ENCODE measurements at regions of chr4 and their contacts with region 1.

Region 1: DNA sequence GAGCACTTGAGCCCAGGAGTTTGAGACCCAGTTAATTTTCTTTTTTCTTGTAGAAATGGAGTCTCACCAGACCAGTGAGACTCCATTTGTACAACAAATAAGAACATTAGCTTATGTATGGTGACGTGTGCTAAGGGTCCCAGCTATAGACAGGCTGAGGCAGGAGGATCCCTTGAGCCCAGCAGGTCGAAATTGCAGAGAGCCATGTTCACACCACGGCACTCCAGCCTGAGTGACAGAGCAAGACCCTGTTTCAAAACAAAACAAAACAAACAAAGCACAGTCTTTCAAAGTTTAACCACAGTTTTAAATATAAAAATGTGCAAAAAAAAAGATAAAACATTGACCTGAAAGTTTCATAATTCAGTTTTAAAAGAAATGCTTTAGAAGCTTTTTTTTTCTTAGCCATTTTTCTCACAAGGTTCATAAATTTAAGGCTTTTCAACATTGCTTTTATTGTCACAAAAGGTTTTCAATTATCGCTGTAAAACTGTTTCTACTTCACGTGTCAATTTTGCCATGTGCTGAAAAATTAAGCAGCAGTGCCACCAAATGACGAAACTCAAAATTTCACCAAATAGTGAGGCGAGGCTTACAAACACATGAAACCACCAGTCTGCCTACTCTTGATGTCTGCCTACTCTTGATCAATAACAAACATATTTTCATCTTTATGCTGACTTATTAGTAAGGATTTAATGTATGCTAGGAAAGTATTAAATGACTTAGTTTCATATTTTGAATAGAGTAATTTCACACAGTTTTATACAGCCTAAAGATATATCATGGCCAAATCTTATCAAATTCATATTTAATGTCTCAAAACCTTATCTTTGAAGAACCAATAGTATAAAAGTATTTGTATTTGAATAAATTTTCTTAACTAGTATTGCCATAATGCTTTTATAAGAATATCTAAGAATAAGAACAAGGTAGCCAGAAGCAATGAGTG is 126.3 kb downstream of the NEK1 start:
- DNase-seq: peak; percentile 84
- H3K4me3 Mint-ChIP-seq: no peak overlapping the region
- H3K27ac Mint-ChIP-seq: no peak overlapping the region
- H3K4me1 Mint-ChIP-seq: no peaks in the 10 kb centered on the region
- H3K27me3 Mint-ChIP-seq: no peaks in the 10 kb centered on the region

Region 2: DNA sequence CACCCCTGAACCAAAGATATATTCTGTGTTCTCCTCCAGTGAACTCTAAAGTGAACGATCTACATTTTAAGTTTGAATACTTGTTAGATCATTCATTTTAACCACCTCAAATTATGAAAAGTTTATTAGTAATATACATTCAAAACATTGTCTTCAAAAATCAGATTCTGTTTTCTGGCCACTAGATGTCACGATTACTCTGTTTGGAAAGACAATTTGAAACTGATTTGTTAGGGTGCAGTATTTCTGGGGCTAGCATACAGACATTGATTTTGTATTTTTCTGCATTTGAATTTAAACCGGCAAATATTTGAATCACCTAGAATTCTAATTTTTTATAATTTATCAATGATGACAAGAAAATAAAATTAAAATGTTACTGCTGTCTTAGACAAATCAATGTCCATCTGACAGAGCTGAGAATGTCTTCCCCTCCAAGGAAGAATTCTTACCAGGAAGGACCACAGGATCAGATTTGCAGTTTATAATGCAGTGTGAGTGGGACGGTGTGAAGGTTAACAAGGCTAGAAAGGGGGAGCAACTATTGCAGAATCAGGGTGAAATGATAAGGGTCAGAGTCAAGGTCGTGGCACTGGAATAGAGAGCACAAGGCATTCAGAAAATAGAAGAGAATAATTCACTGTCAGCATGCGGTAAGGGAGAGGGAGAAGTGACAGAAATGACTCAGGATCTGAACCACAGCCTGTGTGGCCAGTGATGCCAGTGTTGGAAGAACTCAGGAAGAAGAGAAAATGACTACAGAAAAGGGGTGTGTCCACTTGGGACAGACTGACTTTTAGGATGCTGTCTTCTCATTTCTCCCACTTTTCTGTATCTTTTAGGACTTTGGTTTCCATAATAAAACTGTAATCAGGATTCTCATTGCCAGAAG is 1302.1 kb before region 1 on chr4:
- intact Hi-C with region 1: loop called (anchors 10 kb)
- DNase-seq: no peak
- H3K4me3 Mint-ChIP-seq: no peak overlapping the region
- H3K27ac Mint-ChIP-seq: no peak overlapping the region
- H3K4me1 Mint-ChIP-seq: peaks cover 5% of the 10 kb centered on the region
- H3K27me3 Mint-ChIP-seq: no peaks in the 10 kb centered on the region

Region 3: DNA sequence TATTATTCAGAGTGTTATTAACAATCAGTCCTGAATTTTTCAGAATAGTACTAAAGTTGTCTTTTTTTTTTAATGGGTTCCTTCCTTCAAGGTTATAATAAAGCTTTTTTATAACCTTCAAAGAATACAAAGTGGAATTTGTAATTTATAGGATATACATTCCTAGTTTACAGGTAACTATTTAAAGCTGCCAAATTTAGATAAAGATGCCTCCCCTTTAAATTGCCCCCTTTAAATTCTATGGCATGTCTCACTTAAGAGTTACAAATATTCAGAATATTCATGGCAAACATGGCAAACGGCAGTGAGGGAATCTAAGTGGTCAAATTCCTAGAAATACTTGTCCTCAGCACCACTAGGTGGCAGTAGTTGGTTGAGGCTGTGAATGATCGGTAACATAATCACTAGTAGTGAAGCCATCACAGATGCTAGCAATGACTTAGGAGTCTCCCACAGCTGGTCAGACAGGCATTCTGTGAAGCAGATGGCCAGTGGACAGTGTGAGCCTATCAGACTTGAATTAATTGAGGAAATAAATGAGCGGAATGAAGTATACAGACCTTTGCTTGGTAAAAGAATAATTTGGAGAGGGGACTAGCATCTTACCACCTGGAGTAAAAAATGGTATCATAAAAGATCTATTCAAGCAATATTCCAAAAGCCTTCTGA is 562.4 kb before region 1 on chr4:
- intact Hi-C with region 1: loop called (anchors 1 kb)
- DNase-seq: peak; percentile 85
- H3K4me3 Mint-ChIP-seq: no peak overlapping the region
- H3K27ac Mint-ChIP-seq: no peak overlapping the region
- H3K4me1 Mint-ChIP-seq: peaks cover 2% of the 10 kb centered on the region
- H3K27me3 Mint-ChIP-seq: no peaks in the 10 kb centered on the region

Region 4: DNA sequence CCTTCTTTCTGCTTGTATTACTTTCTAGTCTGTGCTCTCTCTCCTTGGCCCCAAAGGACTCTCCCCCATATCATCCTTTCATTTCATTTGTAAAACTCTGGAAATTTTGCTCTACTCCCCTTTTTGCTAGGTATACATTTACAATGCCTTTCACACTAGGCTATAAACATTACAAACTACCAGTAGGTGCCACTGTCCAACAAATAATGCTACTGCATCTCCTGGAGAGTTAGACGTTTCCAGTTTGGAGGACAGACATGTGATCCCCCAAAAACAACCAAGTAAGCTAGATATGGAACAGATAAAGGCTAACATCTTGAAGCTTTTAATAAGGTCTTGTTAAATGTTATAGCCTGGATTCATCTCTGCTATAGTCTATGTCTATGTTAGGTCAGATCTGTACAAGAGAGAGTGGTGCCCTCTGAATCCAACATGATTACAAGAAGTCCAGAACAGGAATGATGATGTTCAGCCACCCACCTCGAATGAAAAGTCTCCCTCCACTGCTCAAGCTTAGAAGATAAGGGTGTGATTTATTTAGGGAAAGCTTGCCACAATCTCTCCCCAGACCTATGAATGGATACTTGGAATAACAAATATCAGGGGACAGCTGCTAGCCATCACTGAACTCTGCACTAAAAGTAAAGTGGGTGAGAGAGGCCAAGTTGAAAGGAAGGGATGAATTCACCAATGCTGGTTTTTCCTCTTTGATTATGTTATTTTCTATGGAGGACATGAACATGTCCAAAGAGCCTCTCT is 490.4 kb before region 1 on chr4:
- intact Hi-C with region 1: loop called (anchors 5 kb)
- DNase-seq: no peak
- H3K4me3 Mint-ChIP-seq: no peak overlapping the region
- H3K27ac Mint-ChIP-seq: no peak overlapping the region
- H3K4me1 Mint-ChIP-seq: peaks cover 5% of the 10 kb centered on the region
- H3K27me3 Mint-ChIP-seq: no peaks in the 10 kb centered on the region

Region 5: DNA sequence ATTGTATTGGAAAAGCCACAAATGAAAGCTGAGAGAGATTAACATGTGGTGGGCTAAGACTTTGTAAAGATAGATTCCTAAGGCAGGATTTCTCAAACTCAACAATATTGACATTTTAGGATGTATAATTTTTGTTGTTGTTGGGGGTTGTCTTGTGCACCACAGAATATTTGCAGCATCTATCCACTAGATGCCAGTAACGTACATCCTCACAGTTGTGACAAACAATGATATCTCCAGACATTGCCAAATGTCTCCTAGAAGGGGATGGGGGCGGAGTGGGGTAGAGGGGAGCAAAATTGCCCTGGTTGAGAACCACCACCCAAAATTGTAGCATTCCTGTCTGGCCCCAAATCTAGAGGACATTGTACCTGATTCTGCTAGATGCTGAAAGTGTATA is 461.3 kb before region 1 on chr4:
- intact Hi-C with region 1: loop called (anchors 2 kb)
- DNase-seq: no peak
- H3K4me3 Mint-ChIP-seq: no peak overlapping the region
- H3K27ac Mint-ChIP-seq: no peak overlapping the region
- H3K4me1 Mint-ChIP-seq: no peaks in the 10 kb centered on the region
- H3K27me3 Mint-ChIP-seq: peaks cover 8% of the 10 kb centered on the region

Region 6: GRCh38 chr4:169270810-169271691 is 215.0 kb before region 1 on chr4 and contains the start of gene SH3RF1:
- intact Hi-C with region 1: loop called (anchors 5 kb)
- DNase-seq: peak; percentile 73
- H3K4me3 Mint-ChIP-seq: peak within 1 kb of the TSS; percentile 83
- H3K27ac Mint-ChIP-seq: no peak within 1 kb of the TSS
- H3K4me1 Mint-ChIP-seq: peaks cover 10% of the 10 kb centered on the region
- H3K27me3 Mint-ChIP-seq: peaks cover 64% of the 10 kb centered on the region
- total RNA-seq, gene SH3RF1: 0.66 and 0.68 TPM in 2 replicates

Region 7: DNA sequence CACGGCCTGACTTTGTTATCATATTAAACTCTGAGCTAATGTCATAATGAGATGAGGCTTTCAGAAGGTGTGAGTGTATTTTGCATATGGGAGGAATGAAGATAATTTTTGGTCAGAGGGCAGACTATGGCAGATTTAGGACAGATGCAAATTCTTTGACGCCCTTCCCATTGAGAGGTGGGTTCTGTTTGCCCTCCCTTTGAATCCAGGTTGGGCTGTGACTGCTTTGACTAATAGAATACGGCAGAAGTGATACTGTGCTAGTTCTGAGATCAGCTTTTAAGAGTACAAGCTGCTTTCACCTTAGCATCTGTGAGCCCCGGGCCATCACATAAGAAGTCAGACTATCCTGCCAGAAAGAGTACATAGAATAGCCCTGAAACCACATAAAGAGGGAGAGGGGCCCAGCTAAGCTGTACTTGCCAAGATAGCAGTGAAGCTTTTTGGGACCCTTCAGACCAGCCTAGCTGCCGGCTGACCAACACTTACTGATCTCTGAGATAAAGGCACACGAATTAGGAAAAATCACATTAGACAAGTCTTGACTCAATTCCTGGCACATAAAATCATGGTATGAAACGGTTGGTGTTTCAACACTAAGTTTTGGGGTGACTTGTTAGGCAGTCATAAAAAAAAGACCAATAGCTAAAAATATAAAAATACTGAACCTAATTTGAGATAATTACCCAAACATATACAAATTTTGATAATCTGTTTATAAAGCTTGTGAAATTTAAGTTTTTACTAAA is 48.6 kb before region 1 on chr4:
- intact Hi-C with region 1: no loop called
- DNase-seq: no peak
- H3K4me3 Mint-ChIP-seq: no peak overlapping the region
- H3K27ac Mint-ChIP-seq: no peak overlapping the region
- H3K4me1 Mint-ChIP-seq: peaks cover 4% of the 10 kb centered on the region
- H3K27me3 Mint-ChIP-seq: no peaks in the 10 kb centered on the region

Measured in activated CD4-positive, alpha-beta T cell treated with anti-CD3 and anti-CD28 coated beads, Interleukin-2, amount 10 ng/mL, durations not matched to agents 24 days and 14 days (primary cell).